Dendritic cell treated with granulocyte-macrophage colony-stimulating factor and Interleukin-4, amounts not matched to agents 40 ng/mL and 50 ng/mL, for 4 days (primary cell): ENCODE measurements at regions of chr6 and their contacts with region 1.

Region 1: DNA sequence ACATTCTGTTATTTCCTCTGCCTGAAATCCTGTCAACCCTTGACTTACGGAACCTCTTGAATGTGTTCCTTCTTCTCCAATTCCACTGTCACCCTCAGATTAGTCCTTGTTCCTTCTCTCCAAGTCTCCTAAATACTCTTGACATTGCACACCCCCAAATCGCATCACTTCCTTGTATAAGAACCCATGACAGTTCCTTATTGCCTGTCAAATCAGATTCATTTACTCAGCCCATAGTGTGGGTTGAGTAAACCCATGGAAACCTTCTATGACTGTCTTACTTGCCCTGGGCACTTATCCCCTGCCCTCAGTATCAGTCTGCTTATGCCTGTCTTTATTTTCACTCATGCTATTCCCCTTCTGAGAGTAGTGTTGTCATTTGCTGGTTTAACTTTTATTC is 40.5 kb downstream of the ARMC2 start:
- H3K4me3 Mint-ChIP-seq: no peak overlapping the region
- H3K27ac Mint-ChIP-seq: peak overlapping the region; percentile 23
- H3K4me1 Mint-ChIP-seq: peaks cover 38% of the 10 kb centered on the region
- H3K27me3 Mint-ChIP-seq: peaks cover 22% of the 10 kb centered on the region

Region 2: DNA sequence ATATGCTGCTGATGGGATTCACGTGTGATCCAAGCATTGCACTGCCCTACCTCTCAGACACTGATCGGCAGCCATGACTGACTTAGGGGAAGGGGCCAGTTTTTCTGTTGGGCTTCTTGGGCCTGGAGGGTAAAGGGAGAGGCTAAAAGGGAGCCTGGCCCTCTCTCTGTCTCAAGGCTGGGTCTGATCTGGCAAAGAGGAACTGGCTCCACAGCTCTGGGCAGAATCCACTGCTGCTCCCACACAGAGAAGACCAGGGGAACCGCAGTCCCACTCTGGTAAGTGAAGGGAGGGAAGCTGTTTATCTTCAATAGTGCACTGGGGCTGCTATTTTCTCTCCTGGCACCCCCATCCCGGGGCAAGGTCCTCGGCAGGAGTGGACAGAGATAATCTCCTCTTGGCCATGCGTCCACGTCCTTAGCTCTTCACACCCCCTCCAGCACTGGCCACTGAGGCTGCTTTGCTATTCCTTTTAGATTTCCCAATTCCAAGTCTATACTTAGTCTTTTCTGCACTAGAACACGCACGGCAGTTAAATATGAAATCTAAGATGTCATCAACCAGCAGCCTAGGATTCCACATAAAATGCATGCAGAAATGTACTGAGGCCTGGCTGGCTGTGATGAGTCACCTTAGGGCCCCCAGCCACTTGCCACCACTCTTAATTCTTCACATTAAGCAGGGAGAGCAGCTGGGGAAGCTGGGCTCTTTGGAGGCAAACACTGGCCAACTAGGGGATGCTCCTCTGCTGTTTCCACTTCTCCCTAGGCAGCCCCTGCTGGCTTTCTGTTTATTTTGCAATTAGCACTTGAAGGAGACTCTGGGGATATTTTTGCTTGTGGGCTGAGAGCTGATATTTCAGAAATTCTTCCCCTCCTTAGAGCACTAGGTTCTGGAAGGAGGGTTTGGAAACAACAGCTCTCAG is 128.4 kb before region 1 on chr6:
- intact Hi-C with region 1: no loop called
- H3K4me3 Mint-ChIP-seq: no peak overlapping the region
- H3K27ac Mint-ChIP-seq: no peak overlapping the region
- H3K4me1 Mint-ChIP-seq: peaks cover 35% of the 10 kb centered on the region
- H3K27me3 Mint-ChIP-seq: peaks cover 11% of the 10 kb centered on the region

Region 3: GRCh38 chr6:108874470-108875160 is 14.1 kb before region 1 on chr6:
- intact Hi-C with region 1: loop called (anchors 2 kb)
- H3K4me3 Mint-ChIP-seq: peak overlapping the region; percentile 24
- H3K27ac Mint-ChIP-seq: peak overlapping the region; percentile 67
- H3K4me1 Mint-ChIP-seq: peaks cover 45% of the 10 kb centered on the region
- H3K27me3 Mint-ChIP-seq: peaks cover 40% of the 10 kb centered on the region